Left colon (tissue), 2 donors: ENCODE measurements at regions of chr5 and their contacts with region 1.

Region 1: GRCh38 chr5:79133657-79134451 is 22.2 kb downstream of the BHMT start:
- DNase-seq: peak; percentile 38 to 76
- ATAC-seq: peak; percentile 79

Region 2: GRCh38 chr5:78449103-78449502 is 684.8 kb before region 1 on chr5:
- intact Hi-C with region 1: no loop called
- DNase-seq: no peak
- ATAC-seq: no peak

Region 3: GRCh38 chr5:79020861-79021561 is 112.8 kb before region 1 on chr5:
- intact Hi-C with region 1: loop called in 1 of 2 experiments (anchors 2 kb)
- DNase-seq: peak; percentile 44 to 53
- ATAC-seq: peak; percentile 87

Region 4: DNA sequence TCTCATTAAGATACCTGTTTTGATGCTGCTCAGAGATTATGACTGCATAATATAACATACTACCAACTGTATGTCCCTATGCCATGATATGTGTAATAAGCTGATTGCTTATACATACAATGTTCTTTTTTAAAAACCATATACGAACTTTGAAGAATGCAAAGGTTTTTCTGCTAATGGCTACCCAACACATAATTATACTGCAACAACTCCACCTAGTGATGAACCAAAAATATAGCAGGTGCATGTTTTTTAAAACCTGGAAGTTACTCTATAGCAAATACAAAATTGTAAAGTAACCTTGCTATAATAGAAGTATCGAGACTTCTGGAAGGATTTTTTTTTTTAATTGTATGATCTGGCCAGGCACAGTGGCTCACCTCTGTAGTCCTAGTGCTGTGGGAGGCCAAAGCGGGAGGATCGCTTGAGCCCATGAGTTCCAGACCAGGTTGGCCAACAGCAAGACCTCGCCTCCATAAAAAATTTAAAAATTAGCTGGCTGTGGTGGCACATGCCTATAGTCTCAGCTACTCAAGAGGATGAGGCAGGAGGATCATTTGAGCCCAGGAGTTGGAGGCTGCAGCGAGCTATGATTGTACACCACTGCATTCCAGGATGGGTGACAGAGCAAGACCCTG is 331.0 kb after region 1 on chr5:
- intact Hi-C with region 1: loop called in 1 of 2 experiments (anchors 5 kb)
- DNase-seq: no peak
- ATAC-seq: peak; percentile 46